Naive thymus-derived CD4-positive, alpha-beta T cell (primary cell): ENCODE measurements at regions of chr1 and their contacts with region 1.

Region 1: GRCh38 chr1:161905269-161905884 is 118.3 kb downstream of the OLFML2B start:
- DNase-seq: peak in 3 of 9 donors; percentile 11 to 37 (median 17)
- ATAC-seq: peak; percentile 61
- H3K4me3 ChIP-seq: no peak overlapping the region
- H3K4me3 Mint-ChIP-seq: no peak overlapping the region
- H3K27ac ChIP-seq: no peak overlapping the region
- H3K27ac Mint-ChIP-seq: peak overlapping the region in 1 of 9 donors; percentile 24
- H3K4me1 ChIP-seq: no peaks in the 10 kb centered on the region
- H3K4me1 Mint-ChIP-seq: peaks cover 0 to 36% (median 20%) of the 10 kb centered on the region in 7 donors
- H3K27me3 ChIP-seq: no peaks in the 10 kb centered on the region
- H3K27me3 Mint-ChIP-seq: no peaks in the 10 kb centered on the region

Region 2: GRCh38 chr1:161486806-161487741 is 418.3 kb before region 1 on chr1:
- CTCF ChIA-PET with region 1: no interaction called
- POLR2A ChIA-PET with region 1: no interaction called
- intact Hi-C with region 1: loop called in 1 of 2 experiments (anchors 10 kb)
- DNase-seq: peak in 7 of 9 donors; percentile 39 to 70 (median 59)
- ATAC-seq: peak; percentile 79
- H3K4me3 ChIP-seq: no peak overlapping the region
- H3K4me3 Mint-ChIP-seq: no peak overlapping the region
- H3K27ac ChIP-seq: no peak overlapping the region
- H3K27ac Mint-ChIP-seq: peak overlapping the region in 1 of 9 donors; percentile 32
- H3K4me1 ChIP-seq: no peaks in the 10 kb centered on the region
- H3K4me1 Mint-ChIP-seq: peaks cover 7 to 20% (median 15%) of the 10 kb centered on the region in 7 donors
- H3K27me3 ChIP-seq: no peaks in the 10 kb centered on the region
- H3K27me3 Mint-ChIP-seq: peaks cover 29 to 51% (median 37%) of the 10 kb centered on the region in 5 donors

Region 3: DNA sequence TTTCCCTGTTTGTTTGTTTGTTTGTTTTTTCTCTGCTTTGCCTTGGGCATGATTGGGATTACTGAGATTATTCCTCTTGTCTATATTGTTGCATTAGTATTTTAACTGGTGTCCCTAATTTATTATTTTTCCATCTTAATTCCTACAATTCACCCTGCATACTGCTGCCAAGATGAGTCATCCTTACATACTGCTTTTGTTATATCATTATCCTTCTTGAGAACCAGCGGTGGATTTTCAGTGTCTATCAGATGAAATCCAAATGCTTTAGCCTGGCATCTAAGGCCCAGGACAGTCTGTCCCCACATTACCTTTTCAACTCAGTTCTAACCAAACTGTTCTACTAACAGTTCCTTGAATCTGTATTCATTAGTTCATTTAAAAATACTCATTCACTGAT is 16.6 kb after region 1 on chr1:
- CTCF ChIA-PET with region 1: interaction called, 4 read pairs
- POLR2A ChIA-PET with region 1: no interaction called
- intact Hi-C with region 1: loop called in 1 of 2 experiments (anchors 1 kb)
- DNase-seq: no peak
- ATAC-seq: no peak
- H3K4me3 ChIP-seq: no peak overlapping the region
- H3K4me3 Mint-ChIP-seq: peak overlapping the region in 2 of 10 donors; percentile 8 to 15
- H3K27ac ChIP-seq: no peak overlapping the region
- H3K27ac Mint-ChIP-seq: peak overlapping the region in 3 of 9 donors; percentile 9 to 34 (median 17)
- H3K4me1 ChIP-seq: peaks cover 15% of the 10 kb centered on the region in 2 donors
- H3K4me1 Mint-ChIP-seq: peaks cover 10 to 83% (median 60%) of the 10 kb centered on the region in 7 donors
- H3K27me3 ChIP-seq: no peaks in the 10 kb centered on the region
- H3K27me3 Mint-ChIP-seq: no peaks in the 10 kb centered on the region

Region 4: GRCh38 chr1:161933592-161934588 is 28.5 kb after region 1 on chr1:
- CTCF ChIA-PET with region 1: interaction called, 3 read pairs
- POLR2A ChIA-PET with region 1: interaction called, 4 read pairs
- intact Hi-C with region 1: loop called in 1 of 2 experiments (anchors 1 kb)
- DNase-seq: peak in 7 of 9 donors; percentile 31 to 73 (median 68)
- ATAC-seq: peak; percentile 91
- H3K4me3 ChIP-seq: peak overlapping the region; percentile 7
- H3K4me3 Mint-ChIP-seq: peak overlapping the region; percentile 51 to 80 (median 68)
- H3K27ac ChIP-seq: peak overlapping the region; percentile 46
- H3K27ac Mint-ChIP-seq: peak overlapping the region; percentile 44 to 95 (median 88)
- H3K4me1 ChIP-seq: peaks cover 25 to 51% of the 10 kb centered on the region in 2 donors
- H3K4me1 Mint-ChIP-seq: peaks cover 16 to 73% (median 33%) of the 10 kb centered on the region in 7 donors
- H3K27me3 ChIP-seq: no peaks in the 10 kb centered on the region
- H3K27me3 Mint-ChIP-seq: no peaks in the 10 kb centered on the region

Region 5: GRCh38 chr1:162023547-162024501 is 118.4 kb after region 1 on chr1 and contains the start of gene OLFML2B:
- CTCF ChIA-PET with region 1: interaction called, 8 read pairs
- POLR2A ChIA-PET with region 1: no interaction called
- intact Hi-C with region 1: loop called in 1 of 2 experiments (anchors 1 kb)
- DNase-seq: peak; percentile 15 to 66 (median 49)
- ATAC-seq: peak; percentile 88
- H3K4me3 ChIP-seq: peak within 1 kb of the TSS; percentile 80
- H3K4me3 Mint-ChIP-seq: peak within 1 kb of the TSS; percentile 89 to 99 (median 94)
- H3K27ac ChIP-seq: no peak within 1 kb of the TSS
- H3K27ac Mint-ChIP-seq: peak within 1 kb of the TSS in 3 of 9 donors; percentile 2 to 55 (median 51)
- H3K4me1 ChIP-seq: peaks cover 0 to 4% of the 10 kb centered on the region in 2 donors
- H3K4me1 Mint-ChIP-seq: peaks cover 6 to 13% (median 9%) of the 10 kb centered on the region in 7 donors
- H3K27me3 ChIP-seq: peaks cover 0 to 3% of the 10 kb centered on the region in 2 donors
- H3K27me3 Mint-ChIP-seq: peaks cover 33 to 54% (median 34%) of the 10 kb centered on the region in 5 donors
- total RNA-seq, gene OLFML2B: 0.27 to 0.47 (median 0.35) TPM in 3 of 5 experiments, not detected in the others

Region 6: DNA sequence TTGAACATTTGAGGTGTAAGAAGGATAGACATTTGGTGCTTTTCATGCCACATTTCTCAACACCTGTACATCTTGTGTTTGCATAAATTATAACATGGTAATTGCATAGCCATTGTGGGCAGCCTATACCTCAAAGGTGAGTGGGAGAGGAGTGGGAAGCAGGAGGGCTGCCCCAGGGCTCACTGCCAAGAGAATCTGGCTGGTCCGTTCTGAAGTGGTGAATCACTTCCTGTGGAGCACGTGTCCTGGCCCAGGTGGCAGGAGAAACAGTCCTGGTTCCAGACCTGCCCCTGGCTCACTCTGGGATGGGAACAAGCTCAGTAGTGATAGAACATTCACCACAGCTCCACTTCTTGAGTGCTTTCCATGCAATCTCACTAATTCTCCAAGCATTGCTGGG is 129.9 kb after region 1 on chr1:
- CTCF ChIA-PET with region 1: interaction called, 17 read pairs
- POLR2A ChIA-PET with region 1: no interaction called
- intact Hi-C with region 1: loop called in 1 of 2 experiments (anchors 2 kb)
- DNase-seq: no peak
- ATAC-seq: no peak
- H3K4me3 ChIP-seq: no peak overlapping the region
- H3K4me3 Mint-ChIP-seq: no peak overlapping the region
- H3K27ac ChIP-seq: no peak overlapping the region
- H3K27ac Mint-ChIP-seq: no peak overlapping the region
- H3K4me1 ChIP-seq: no peaks in the 10 kb centered on the region
- H3K4me1 Mint-ChIP-seq: peaks cover 0 to 10% (median 0%) of the 10 kb centered on the region in 7 donors
- H3K27me3 ChIP-seq: no peaks in the 10 kb centered on the region
- H3K27me3 Mint-ChIP-seq: peaks cover under 1 to 25% (median 13%) of the 10 kb centered on the region in 5 donors

Region 7: DNA sequence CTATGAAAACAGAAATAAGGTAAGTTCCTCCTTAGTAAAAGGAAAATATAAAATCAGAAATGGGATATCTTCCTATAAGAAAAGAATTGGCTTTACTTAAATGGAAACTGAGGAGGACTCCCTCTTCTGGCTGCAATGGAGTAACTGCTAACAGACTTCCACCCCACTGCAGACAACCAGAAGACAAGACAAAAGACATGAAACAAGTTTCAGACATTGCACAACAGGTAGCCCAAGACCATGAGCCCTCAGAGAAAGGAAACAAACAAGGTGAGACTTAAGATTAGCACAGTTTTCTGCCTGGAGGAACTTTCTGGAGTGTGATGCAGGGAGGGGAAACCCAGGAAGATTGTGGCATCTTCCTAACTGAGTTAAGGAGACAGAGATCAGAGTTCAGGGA is 135.3 kb after region 1 on chr1:
- CTCF ChIA-PET with region 1: interaction called, 17 read pairs
- POLR2A ChIA-PET with region 1: no interaction called
- intact Hi-C with region 1: loop called in 1 of 2 experiments (anchors 2 kb)
- DNase-seq: no peak
- ATAC-seq: no peak
- H3K4me3 ChIP-seq: no peak overlapping the region
- H3K4me3 Mint-ChIP-seq: no peak overlapping the region
- H3K27ac ChIP-seq: no peak overlapping the region
- H3K27ac Mint-ChIP-seq: peak overlapping the region in 1 of 9 donors; percentile 12
- H3K4me1 ChIP-seq: no peaks in the 10 kb centered on the region
- H3K4me1 Mint-ChIP-seq: peaks cover 0 to 4% (median 0%) of the 10 kb centered on the region in 7 donors
- H3K27me3 ChIP-seq: no peaks in the 10 kb centered on the region
- H3K27me3 Mint-ChIP-seq: peaks cover 5 to 20% (median 10%) of the 10 kb centered on the region in 5 donors

Region 8: GRCh38 chr1:162151900-162152829 is 246.8 kb after region 1 on chr1:
- CTCF ChIA-PET with region 1: no interaction called
- POLR2A ChIA-PET with region 1: no interaction called
- intact Hi-C with region 1: no loop called
- DNase-seq: no peak
- ATAC-seq: peak; percentile 70
- H3K4me3 ChIP-seq: no peak overlapping the region
- H3K4me3 Mint-ChIP-seq: no peak overlapping the region
- H3K27ac ChIP-seq: no peak overlapping the region
- H3K27ac Mint-ChIP-seq: no peak overlapping the region
- H3K4me1 ChIP-seq: no peaks in the 10 kb centered on the region
- H3K4me1 Mint-ChIP-seq: no peaks in the 10 kb centered on the region
- H3K27me3 ChIP-seq: no peaks in the 10 kb centered on the region
- H3K27me3 Mint-ChIP-seq: peaks cover 8 to 27% (median 15%) of the 10 kb centered on the region in 5 donors